HEK293 (cell line): ENCODE measurements at regions of chrX and their contacts with region 1.

Region 1: DNA sequence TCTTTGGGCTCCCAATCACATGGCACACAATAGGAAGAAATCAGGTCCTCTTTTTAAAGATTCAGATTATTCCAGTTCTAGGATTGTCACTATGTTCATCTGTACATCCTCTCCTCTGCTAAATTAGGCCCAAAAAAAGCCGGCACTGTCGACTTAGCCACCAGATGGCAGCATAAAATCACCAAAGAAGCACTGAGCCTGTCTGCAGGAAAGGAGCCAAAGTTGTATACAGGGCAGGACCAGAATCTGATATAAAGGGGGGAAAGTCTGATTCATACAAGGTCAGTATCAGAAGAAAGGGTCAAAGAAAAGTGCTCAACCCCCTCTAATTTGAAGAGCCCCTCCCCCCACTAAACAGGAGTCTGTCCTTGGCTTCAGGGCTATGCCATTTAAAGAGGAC is 292.5 kb downstream of the CHIC1 start:
- H3K4me3 ChIP-seq: no peak overlapping the region
- H3K27ac ChIP-seq: no peak overlapping the region
- H3K4me1 ChIP-seq: no peaks in the 10 kb centered on the region
- CTCF ChIP-seq: peak; percentile 89

Region 2: DNA sequence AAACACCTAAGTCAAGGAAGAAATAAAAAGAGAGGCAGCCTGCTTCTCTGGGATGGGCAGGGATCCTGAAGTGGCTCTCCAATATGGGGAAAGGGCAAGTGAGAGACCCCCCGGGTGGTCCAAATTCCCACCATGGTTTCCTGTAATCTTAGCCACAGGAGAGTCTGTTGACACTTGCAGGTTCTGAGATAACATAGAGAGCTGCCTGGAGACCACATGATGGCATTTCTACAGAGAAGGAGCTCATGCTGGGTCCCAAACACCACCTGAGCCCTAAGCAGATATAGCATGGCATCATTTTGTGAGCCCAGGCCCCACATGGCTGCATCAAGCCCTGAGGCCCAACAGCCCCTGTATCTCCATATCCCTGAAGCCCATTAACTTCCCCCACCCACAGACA is 826.7 kb before region 1 on chrX:
- CTCF ChIA-PET with region 1: no interaction called
- POLR2A ChIA-PET with region 1: no interaction called
- H3K4me3 ChIP-seq: no peak overlapping the region
- H3K27ac ChIP-seq: no peak overlapping the region
- H3K4me1 ChIP-seq: no peaks in the 10 kb centered on the region
- CTCF ChIP-seq: no peak

Region 3: DNA sequence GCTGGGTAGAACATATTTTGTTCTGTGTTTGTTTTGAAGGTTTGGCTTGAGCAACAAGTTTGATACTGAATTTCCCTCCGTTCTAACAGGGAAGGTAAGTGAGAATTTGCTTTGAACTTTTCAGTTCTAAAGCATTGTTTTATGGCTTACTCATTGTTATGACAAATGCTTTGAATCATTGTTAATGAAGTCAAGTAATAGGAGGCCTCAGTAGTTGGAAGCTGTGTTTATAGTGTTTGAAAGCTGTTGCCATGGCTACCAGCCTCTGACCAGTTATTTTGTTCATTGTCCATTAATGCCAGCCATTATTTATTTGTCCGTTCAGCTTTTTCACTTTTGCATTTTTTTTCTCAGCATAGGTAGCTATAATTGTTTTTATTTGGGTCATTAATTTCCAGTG is 278.2 kb before region 1 on chrX:
- CTCF ChIA-PET with region 1: no interaction called
- POLR2A ChIA-PET with region 1: no interaction called
- H3K4me3 ChIP-seq: no peak overlapping the region
- H3K27ac ChIP-seq: no peak overlapping the region
- H3K4me1 ChIP-seq: peaks cover 15% of the 10 kb centered on the region
- CTCF ChIP-seq: no peak

Region 4: GRCh38 chrX:73916931-73917667 is 61.6 kb after region 1 on chrX:
- CTCF ChIA-PET with region 1: interaction called, 20 read pairs
- POLR2A ChIA-PET with region 1: interaction called, 56 read pairs
- H3K4me3 ChIP-seq: no peak overlapping the region
- H3K27ac ChIP-seq: peak overlapping the region; percentile 69
- H3K4me1 ChIP-seq: peaks cover 40% of the 10 kb centered on the region
- CTCF ChIP-seq: no peak

Region 5: GRCh38 chrX:74009041-74009440 is 153.5 kb after region 1 on chrX:
- CTCF ChIA-PET with region 1: interaction called, 82 read pairs
- POLR2A ChIA-PET with region 1: interaction called, 5 read pairs
- H3K4me3 ChIP-seq: no peak overlapping the region
- H3K27ac ChIP-seq: no peak overlapping the region
- H3K4me1 ChIP-seq: no peaks in the 10 kb centered on the region
- CTCF ChIP-seq: no peak

Region 6: GRCh38 chrX:74133156-74133796 is 277.7 kb after region 1 on chrX:
- CTCF ChIA-PET with region 1: interaction called, 99 read pairs
- POLR2A ChIA-PET with region 1: no interaction called
- H3K4me3 ChIP-seq: no peak overlapping the region
- H3K27ac ChIP-seq: no peak overlapping the region
- H3K4me1 ChIP-seq: no peaks in the 10 kb centered on the region
- CTCF ChIP-seq: peak; percentile 86